ENCODE measurements at regions of chr17 and their contacts with region 1.

Region 1: DNA sequence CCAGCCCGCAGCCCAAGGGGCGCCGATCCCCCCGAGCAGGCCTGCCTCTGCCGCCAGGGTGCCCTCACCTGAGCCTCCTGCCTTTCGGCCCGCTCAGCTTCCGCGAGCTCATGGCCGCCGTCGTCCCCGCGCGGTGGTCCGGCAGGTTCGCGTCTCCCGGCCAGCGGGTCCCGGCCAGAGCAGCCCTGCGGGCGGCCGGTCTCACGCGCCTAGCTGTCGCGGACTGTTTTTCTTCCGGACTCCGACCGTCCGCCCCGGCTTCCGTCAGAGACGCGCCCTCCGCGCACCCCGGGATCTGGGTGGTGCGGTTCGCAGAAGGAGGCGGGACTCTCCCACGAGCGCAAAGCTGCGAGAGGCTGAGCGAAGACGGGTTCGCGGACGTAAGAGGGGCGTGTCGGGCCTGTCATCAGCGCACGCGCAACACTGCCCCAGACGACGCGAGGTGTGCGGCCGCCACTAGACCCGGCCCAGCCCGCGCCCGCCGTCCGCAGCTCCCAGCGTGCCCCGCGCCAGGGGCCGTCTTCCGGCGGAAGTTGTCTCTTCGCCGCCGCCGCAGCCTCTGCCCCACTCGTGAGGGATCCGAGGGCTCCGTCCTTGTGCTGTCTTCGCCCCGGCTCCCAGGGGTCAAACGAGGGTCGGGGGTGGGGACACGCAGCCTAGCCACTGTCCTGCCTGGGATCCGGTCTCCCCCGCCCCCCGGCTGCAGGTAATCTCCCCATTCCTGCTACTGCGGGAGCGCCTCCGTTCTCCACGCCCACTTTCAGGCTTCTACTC is at the start of gene INPP5K:
- DNase-seq: peak; percentile 99
- total RNA-seq, gene INPP5K: 34.2 TPM

Region 2: GRCh38 chr17:1267471-1267947 is 249.1 kb before region 1 on chr17:
- intact Hi-C with region 1: loop called (anchors 5 kb)
- DNase-seq: no peak

Region 3: DNA sequence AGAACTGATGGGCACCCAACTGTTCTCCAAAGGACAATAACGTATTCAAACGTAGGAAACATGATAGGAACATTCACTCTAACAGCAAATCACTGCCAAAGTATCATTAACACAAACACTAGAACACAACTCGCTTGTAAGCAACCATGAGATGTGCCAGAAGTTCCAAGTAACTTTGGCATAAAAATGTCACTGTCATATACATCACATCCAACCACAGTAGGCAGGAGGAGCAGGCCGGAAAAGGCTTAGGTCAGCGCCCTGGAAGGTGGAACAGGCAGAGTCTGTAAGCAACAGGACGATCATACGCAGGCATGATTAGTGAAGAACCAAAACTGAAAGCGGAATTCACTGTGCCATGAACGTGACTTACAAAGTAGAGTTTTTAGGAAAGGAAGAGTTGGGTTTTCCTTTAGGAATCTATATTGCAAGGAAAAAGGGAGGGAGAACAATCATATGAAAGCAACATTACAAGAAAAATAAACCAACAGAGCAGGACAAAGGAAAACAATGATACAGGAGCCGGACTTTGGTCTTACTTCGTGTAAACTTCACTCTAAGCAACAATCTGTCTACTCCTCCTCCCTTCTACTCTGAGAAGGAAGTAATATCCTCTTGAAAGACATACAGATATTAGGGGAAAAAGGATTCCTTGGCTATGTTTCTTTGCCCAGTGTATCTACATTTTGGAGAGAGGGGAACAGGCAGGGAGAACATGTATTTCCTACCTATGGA is 168.8 kb before region 1 on chr17:
- intact Hi-C with region 1: loop called (anchors 5 kb)
- DNase-seq: no peak

Region 4: GRCh38 chr17:1365445-1366039 is 151.0 kb before region 1 on chr17:
- intact Hi-C with region 1: loop called (anchors 1 kb)
- DNase-seq: peak; percentile 79

Region 5: GRCh38 chr17:1455797-1456599 is 60.6 kb before region 1 on chr17 and contains the start of gene CRK:
- intact Hi-C with region 1: loop called (anchors 1 kb)
- DNase-seq: peak; percentile 99
- total RNA-seq, gene CRK: 43.4 TPM

Region 6: DNA sequence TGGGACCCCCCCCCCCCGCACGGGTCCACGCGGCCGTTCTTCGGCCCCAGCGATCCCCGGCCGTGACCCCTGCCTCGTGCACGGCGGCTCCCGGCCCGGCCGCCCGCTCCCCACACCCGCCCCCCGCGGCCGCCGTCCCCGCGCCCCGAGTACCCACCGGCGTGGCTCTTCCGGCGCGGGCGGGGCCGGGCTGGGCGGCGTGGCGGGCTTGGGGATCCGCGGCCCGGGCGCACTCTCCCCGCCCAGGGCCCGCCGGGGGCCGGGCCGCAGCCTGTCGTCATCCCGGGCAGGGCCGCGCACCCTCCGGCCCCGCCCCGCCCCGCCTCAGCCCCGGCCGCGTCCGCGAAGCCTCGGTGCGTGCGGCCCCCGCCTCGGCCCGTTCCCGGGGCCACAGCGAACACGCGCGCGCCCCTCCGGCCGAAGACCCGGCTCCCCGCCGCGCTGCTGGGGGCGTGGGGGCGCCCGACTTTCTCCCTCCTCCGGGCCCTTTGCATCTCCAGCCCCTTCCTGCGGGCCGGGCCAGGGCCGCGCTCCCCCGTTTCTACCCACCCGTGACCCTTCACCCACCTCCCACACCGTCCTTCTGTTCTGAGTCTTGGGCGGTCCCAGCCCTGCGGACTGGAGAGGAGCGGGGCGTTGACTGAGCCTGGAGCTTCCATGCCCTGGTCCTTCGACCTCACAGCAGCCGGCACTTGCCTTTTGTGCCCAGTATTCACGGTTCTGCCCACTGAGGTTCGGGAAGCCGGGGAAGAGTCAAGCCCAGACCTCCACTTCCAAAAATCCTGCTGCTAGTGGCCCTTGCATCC is 24.9 kb before region 1 on chr17:
- intact Hi-C with region 1: loop called (anchors 2 kb)
- DNase-seq: no peak

Region 7: DNA sequence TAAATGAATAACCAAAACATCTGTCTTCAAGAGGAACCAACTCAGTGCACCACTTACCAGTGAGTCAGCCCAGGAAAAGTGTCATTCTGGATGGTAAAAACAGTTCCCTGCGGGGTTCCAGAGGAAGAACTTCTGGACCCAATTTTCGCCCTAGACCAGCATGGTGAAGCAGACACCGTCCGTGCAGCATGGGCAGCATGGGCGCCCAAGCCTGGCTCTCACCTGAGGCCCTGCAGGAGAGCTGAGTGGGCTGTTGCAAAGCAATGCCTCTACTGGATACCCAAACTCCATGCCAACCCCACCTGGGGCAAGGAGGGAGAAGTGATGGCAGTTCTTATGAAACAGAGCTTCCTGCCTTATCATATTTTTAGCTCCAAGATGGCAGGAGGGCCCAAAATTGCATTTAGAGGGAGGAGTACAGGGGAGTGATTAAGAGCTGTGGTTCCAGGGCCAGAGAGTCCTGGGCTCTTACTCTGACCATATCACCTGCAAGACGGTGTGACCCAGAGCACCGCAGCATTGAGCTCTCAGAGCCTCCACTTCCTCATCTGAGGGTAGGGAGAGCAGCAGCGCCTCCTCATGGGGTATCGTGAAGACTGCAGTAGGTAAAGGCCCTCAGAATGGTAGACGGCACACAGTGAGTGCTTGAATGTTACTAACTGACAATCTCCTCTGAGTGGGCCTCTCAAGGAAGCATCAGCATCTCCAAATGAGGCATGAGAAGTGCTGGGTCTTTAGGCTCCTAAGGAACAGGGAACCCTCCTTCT is 16.4 kb after region 1 on chr17:
- intact Hi-C with region 1: no loop called
- DNase-seq: no peak